Right lobe of liver (tissue), 6 donors: ENCODE measurements at regions of chr12 and their contacts with region 1.

Region 1: GRCh38 chr12:57429473-57430111 is 1.3 kb downstream of the R3HDM2 start:
- DNase-seq: peak in 1 of 3 donors; percentile 38
- ATAC-seq: no peak
- H3K4me3 ChIP-seq: peak overlapping the region; percentile 46 to 69 (median 65)
- H3K27ac ChIP-seq: peak overlapping the region; percentile 88 to 96 (median 90)
- H3K4me1 ChIP-seq: peaks cover 0 to 25% (median under 1%) of the 10 kb centered on the region in 4 donors
- H3K27me3 ChIP-seq: no peaks in the 10 kb centered on the region
- CTCF ChIP-seq: no peak
- POLR2A ChIP-seq: no peak

Region 2: DNA sequence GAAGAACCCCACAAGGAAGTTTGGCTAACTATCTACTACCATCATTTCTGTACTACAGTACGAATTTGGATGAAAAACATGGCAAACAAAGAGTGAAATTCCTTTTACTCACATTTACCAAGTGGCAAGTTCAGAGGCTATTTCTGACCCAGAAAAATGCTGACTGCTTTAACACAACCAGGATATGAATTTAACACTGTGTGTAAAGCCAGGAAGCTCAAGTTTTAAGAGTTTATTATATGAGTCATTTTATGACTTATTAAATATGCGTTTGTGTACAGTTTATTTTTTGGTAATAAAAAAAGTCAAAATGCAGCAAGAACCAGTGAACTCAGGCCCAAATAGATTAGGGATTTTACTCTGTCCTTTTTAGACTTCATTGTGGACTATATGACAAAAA is 120.2 kb before region 1 on chr12:
- intact Hi-C with region 1: loop called in 1 of 2 experiments (anchors 10 kb)
- DNase-seq: no peak
- ATAC-seq: peak in 1 of 4 donors; percentile 9
- H3K4me3 ChIP-seq: no peak overlapping the region
- H3K27ac ChIP-seq: no peak overlapping the region
- H3K4me1 ChIP-seq: no peaks in the 10 kb centered on the region
- H3K27me3 ChIP-seq: no peaks in the 10 kb centered on the region
- CTCF ChIP-seq: no peak
- POLR2A ChIP-seq: no peak

Region 3: GRCh38 chr12:57372233-57372632 is 57.4 kb before region 1 on chr12:
- intact Hi-C with region 1: loop called in 1 of 2 experiments (anchors 10 kb)
- DNase-seq: no peak
- ATAC-seq: no peak
- H3K4me3 ChIP-seq: no peak overlapping the region
- H3K27ac ChIP-seq: no peak overlapping the region
- H3K4me1 ChIP-seq: peaks cover 0 to 20% (median 5%) of the 10 kb centered on the region in 4 donors
- H3K27me3 ChIP-seq: no peaks in the 10 kb centered on the region
- CTCF ChIP-seq: no peak
- POLR2A ChIP-seq: no peak

Region 4: GRCh38 chr12:57389033-57389432 is 40.6 kb before region 1 on chr12:
- intact Hi-C with region 1: no loop called
- DNase-seq: no peak
- ATAC-seq: no peak
- H3K4me3 ChIP-seq: no peak overlapping the region
- H3K27ac ChIP-seq: no peak overlapping the region
- H3K4me1 ChIP-seq: peaks cover 0 to 5% (median 0%) of the 10 kb centered on the region in 4 donors
- H3K27me3 ChIP-seq: no peaks in the 10 kb centered on the region
- CTCF ChIP-seq: no peak
- POLR2A ChIP-seq: no peak